ENCODE measurements at regions of chr14 and their contacts with region 1.

Region 1: DNA sequence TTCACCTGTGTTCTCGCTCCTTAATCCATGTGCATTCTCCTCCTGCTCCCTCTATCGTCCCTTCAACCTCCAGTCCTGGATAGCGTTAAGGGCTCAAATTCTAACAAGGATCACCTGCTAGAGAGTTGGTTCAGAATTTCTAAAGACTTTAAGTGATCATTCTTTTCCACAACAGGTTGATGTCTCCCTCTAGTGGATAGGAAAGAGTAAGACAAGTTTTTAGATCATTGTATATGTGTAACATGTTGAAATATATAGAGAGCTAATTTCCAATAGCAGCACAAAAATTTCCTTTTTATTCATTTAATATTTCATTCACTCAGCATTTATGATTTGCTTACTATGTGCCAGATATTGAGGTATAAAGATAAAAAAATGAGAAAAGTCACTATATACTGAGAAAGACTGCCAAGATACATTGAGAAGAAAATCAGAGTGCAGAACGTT is 9.3 kb upstream of the ESR2 start:
- DNase-seq: no peak

Region 2: GRCh38 chr14:63795532-63795931 is 508.0 kb before region 1 on chr14:
- intact Hi-C with region 1: loop called (anchors 5 to 10 kb)
- DNase-seq: no peak

Region 3: GRCh38 chr14:63800651-63801375 is 502.7 kb before region 1 on chr14:
- intact Hi-C with region 1: loop called (anchors 5 to 10 kb)
- DNase-seq: no peak

Region 4: DNA sequence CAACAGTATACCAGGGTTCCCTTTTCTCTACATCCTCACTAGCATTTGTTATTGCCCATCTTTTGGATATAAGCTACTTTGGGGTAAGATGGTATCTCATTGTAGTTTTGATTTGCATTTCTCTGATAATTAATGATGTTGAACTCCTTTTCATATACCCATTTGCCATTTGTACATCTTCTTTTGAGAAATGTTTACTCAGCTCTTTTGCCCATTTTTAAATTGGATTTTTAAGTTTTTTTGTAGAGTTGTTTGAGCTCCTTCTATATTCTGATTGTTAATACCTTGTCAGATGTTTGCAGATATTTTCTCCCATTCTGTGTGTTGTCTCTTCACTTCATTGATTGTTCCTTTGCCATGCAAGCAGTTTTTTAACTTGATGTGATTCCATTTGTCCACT is 31.5 kb before region 1 on chr14:
- intact Hi-C with region 1: no loop called
- DNase-seq: no peak